Activated T-helper 1 cell treated with anti-CD3 and anti-CD28 coated beads, Interleukin-12 subunit alpha, Interleukin-12 subunit beta, Interleukin-2, Interleukin-4 antibody, amounts not matched to agents 30 ng/mL and 10 ng/mL and 1 ng/mL, durations not matched to agents 14 hours and 24 hours and 36 hours (primary cell): ENCODE measurements at regions of chr1 and their contacts with region 1.

Region 1: GRCh38 chr1:84573967-84574842 is at the start of gene CTBS:
- DNase-seq: peak; percentile 76
- H3K4me3 Mint-ChIP-seq: peak within 1 kb of the TSS; percentile 98
- H3K27ac Mint-ChIP-seq: peak within 1 kb of the TSS; percentile 100
- H3K4me1 Mint-ChIP-seq: peaks cover 48% of the 10 kb centered on the region
- H3K27me3 Mint-ChIP-seq: peaks cover 2% of the 10 kb centered on the region
- total RNA-seq, gene CTBS: 14.2 and 14.5 TPM in 2 replicates

Region 2: GRCh38 chr1:83508485-83509151 is 1065.6 kb before region 1 on chr1:
- intact Hi-C with region 1: loop called (anchors 10 kb)
- DNase-seq: peak; percentile 60
- H3K4me3 Mint-ChIP-seq: peak overlapping the region; percentile 59
- H3K27ac Mint-ChIP-seq: peak overlapping the region; percentile 92
- H3K4me1 Mint-ChIP-seq: peaks cover 53% of the 10 kb centered on the region
- H3K27me3 Mint-ChIP-seq: no peaks in the 10 kb centered on the region

Region 3: DNA sequence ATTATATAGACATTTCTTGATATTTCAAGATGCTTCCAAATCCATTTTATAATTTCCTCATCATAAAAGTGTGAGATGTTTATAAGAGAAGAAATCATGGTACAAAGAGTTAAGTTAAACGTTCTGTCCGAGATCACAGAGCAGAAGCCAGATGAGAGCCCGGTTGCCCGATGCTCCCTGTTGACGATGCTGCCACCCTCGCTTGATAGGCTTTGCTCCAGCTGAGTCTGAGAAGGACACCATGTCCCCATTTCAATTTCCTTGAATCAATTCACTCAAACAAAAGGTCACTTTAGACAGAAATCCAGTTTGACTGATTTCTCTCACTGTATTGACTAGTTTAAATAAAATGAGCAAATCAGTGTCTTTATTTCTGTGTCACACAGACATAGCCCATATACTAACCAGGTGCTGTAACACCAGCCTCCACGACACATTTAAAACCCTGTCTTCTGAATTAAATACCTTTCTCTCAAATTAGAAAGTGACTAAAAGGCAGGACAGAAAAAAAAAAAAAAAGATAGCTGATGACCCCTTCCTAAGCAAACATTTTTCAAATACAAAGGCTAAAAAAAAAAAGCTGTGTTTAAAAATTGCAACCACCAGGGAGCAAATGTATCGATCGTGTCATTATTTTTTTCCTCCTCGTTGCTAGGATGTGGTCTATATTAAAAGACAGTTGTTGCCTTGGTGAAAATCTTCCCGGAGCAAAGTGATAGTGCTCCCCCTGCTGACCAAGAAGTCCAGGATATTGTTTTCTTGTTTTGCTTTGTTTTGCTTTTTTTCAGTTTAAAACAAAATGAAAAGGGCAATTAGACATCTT is 140.7 kb before region 1 on chr1:
- intact Hi-C with region 1: loop called (anchors 2 kb)
- DNase-seq: peak; percentile 54
- H3K4me3 Mint-ChIP-seq: peak overlapping the region; percentile 41
- H3K27ac Mint-ChIP-seq: peak overlapping the region; percentile 9
- H3K4me1 Mint-ChIP-seq: peaks cover 11% of the 10 kb centered on the region
- H3K27me3 Mint-ChIP-seq: no peaks in the 10 kb centered on the region

Region 4: DNA sequence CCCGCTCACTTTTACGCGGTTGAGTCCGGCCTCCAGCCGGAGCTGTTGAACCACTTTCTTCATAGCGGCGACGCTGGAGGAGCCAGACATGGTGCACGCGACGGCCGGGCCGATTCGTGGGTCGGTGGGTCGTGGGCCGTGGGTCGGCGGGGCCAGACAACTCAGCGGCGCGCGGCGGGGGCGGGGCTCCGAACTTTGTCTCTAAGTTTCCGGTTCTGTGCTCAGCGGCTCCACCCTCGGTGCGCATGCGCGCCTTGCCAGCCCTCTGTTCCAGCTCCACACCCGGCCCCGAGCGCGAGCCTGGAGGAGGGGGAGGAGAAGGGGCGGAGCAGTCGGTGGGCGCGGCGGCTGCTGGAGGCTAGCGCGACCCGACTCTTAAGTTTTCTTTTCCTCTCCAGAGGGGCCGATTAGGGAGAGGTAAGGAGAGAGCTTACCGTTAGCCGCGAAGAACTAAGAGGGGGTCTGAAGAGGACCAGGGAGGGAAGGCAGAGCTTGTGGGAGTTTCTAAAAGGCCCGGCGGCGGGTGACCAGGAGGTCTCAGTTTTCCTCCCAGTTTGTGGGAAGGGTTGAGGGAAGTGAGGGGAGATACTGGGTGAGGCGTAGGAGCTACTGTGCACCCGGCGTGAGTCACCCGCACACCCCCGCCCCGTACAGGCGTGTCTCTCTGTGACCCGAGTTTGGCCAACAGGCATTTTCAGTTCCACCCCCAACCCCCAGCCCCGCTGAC is 68.0 kb before region 1 on chr1 and contains the starts of genes GNG5 and SPATA1:
- intact Hi-C with region 1: loop called (anchors 1 kb)
- DNase-seq: peak; percentile 96
- H3K4me3 Mint-ChIP-seq: peak within 1 kb of the TSS; percentile 98
- H3K27ac Mint-ChIP-seq: peak within 1 kb of the TSS; percentile 98
- H3K4me1 Mint-ChIP-seq: peaks cover 38% of the 10 kb centered on the region
- H3K27me3 Mint-ChIP-seq: no peaks in the 10 kb centered on the region
- total RNA-seq, gene GNG5: 107 and 110 TPM in 2 replicates
- total RNA-seq, gene SPATA1: 1.2 and 1.3 TPM in 2 replicates

Region 5: DNA sequence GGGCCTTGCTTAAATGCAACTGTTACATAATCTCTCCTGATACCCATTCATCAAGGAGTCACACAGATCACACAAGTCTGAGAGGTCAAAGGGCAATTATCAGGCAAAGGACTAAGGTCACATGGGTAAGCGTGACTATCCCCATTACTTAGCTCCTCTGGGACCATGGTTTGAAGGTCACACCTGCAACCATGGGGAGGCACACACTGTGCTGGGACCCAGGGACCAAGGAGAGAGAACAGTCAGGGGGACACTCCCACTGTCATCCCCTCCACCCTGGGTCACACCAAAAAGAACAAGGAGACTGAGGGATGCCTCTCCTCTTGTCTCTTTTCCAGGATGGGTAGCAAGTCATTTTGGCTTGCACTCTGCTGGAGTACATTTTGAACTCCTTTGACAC is 31.0 kb after region 1 on chr1:
- intact Hi-C with region 1: no loop called
- DNase-seq: no peak
- H3K4me3 Mint-ChIP-seq: no peak overlapping the region
- H3K27ac Mint-ChIP-seq: no peak overlapping the region
- H3K4me1 Mint-ChIP-seq: peaks cover 6% of the 10 kb centered on the region
- H3K27me3 Mint-ChIP-seq: peaks cover 2% of the 10 kb centered on the region

Region 6: DNA sequence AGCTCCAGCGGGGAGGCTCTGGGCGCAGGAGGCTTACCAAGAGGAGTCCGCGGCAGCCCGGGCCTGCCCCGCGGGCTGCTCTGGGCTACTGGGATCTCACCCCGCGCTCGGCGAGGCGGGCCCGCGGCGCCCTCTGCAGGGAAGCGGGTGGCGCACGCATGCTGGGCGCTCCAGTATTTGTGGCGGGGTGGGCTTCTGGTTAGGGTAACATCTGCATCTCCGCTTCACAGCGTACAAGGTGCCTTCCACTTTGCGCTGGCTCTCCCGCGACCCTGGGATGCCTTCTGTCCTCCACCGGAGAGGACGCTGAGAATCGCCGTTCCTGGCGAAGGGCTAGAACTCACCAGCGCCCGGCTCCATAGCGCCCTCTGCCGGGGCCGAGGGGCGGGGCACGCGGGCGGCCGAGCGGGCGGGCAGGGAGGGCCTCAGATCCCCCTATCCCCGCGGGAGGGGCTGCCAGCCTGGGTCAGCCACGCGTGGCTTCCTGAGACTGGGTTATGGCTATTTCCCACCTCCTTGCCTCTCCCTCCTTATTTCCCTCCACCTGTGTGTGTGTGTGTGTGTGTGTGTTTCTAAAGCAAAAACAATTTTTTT is 46.6 kb after region 1 on chr1:
- intact Hi-C with region 1: loop called (anchors 1 kb)
- DNase-seq: peak; percentile 79
- H3K4me3 Mint-ChIP-seq: peak overlapping the region; percentile 88
- H3K27ac Mint-ChIP-seq: peak overlapping the region; percentile 80
- H3K4me1 Mint-ChIP-seq: peaks cover 23% of the 10 kb centered on the region
- H3K27me3 Mint-ChIP-seq: no peaks in the 10 kb centered on the region

Region 7: DNA sequence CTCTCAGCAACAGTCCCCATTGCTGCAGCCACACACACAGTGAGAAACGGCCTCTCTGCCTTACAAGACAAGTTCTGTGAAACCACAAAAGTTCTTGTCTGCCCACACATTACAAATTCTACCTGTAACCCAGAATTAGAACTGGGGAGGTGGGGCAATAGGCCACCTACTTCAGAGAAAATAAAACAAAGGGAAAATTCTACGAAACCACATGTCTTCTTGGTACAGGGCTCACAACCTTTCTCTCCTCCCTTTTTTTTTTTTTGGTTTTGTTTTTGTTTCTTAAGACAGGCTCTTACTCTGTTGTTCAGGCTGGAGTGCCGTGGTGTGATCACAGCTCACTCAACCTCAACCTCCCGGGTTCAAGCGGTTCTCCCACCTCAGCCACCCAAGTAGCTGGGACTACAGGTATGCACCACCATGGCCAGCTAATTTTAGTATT is 288.6 kb after region 1 on chr1:
- intact Hi-C with region 1: loop called (anchors 10 kb)
- DNase-seq: peak; percentile 66
- H3K4me3 Mint-ChIP-seq: peak overlapping the region; percentile 77
- H3K27ac Mint-ChIP-seq: peak overlapping the region; percentile 82
- H3K4me1 Mint-ChIP-seq: peaks cover 53% of the 10 kb centered on the region
- H3K27me3 Mint-ChIP-seq: peaks cover 1% of the 10 kb centered on the region